Psoas muscle (tissue), 8 donors: ENCODE measurements at regions of chr2 and their contacts with region 1.

Region 1: GRCh38 chr2:113806217-113806930 is 49.9 kb upstream of the SLC35F5 start:
- DNase-seq: no peak
- ATAC-seq: no peak
- H3K4me3 ChIP-seq: no peak overlapping the region
- H3K27ac ChIP-seq: no peak overlapping the region
- H3K4me1 ChIP-seq: no peaks in the 10 kb centered on the region
- H3K27me3 ChIP-seq: no peaks in the 10 kb centered on the region
- CTCF ChIP-seq: no peak

Region 2: GRCh38 chr2:114011713-114012112 is 205.3 kb after region 1 on chr2:
- intact Hi-C with region 1: no loop called
- DNase-seq: no peak
- ATAC-seq: no peak
- H3K4me3 ChIP-seq: no peak overlapping the region
- H3K27ac ChIP-seq: no peak overlapping the region
- H3K4me1 ChIP-seq: no peaks in the 10 kb centered on the region
- H3K27me3 ChIP-seq: no peaks in the 10 kb centered on the region
- CTCF ChIP-seq: no peak

Region 3: DNA sequence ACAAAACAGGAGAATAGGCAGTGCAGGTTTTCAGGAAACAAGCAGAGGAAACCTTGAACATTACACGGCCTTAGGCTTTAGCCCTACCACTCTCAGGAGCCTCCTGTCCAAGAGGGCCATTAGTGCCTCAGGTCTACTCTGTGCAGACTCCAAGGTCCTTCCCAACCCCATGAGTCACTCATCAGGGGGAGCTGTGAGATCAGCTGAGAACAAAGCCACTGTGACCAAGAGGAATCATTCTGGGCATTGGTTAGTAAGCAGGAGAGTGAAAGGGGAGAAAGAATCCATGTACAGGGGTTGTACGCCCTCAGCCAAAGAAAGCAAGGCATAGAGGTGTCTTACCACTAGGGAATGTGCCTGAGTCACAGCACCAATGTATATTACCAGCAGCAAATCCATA is 1316.3 kb after region 1 on chr2:
- intact Hi-C with region 1: loop called in 1 of 2 experiments (anchors 10 kb)
- DNase-seq: no peak
- ATAC-seq: no peak
- H3K4me3 ChIP-seq: no peak overlapping the region
- H3K27ac ChIP-seq: no peak overlapping the region
- H3K4me1 ChIP-seq: no peaks in the 10 kb centered on the region
- H3K27me3 ChIP-seq: no peaks in the 10 kb centered on the region
- CTCF ChIP-seq: no peak